Mammary epithelial cell (primary cell): ENCODE measurements at regions of chr1 and their contacts with region 1.

Region 1: DNA sequence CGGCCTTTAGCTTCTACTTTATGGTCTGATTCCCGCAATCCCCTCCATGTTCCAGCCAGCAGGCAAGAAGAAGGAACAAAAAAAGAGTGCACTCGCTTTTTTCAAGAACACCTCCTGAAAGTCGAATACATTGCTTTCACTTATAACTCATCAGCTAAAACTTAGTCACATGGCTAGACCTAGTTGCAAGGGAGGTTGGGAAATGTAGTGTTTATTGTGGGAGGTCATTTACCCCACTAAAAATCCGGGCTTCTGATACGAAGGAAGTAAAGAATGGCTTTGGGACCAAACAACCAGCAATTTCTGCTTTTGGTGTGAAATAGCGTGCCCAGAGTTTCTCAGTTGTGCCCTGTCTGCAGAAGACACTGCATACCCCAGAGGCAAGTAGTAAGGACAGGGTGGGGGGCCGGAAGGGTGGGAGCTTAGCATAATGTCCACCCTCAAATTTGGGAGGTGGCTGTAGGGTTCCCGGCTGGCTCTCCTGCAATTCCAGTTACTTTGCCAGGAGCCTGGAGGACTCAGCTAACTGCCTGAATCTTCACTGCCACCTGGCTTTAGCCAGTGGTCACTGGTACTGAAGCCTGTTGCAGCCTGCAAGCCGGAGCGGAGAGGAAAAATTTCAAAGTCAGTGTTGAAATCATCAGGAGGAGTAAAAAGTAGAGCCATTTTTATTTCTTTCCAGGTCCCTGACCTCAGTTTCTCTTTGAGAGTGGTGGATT is 57.7 kb upstream of the F3 start:
- DNase-seq: peak; percentile 57
- H3K4me3 ChIP-seq: no peak overlapping the region
- H3K27ac ChIP-seq: no peak overlapping the region
- H3K4me1 ChIP-seq: peaks cover 30% of the 10 kb centered on the region
- H3K27me3 ChIP-seq: no peaks in the 10 kb centered on the region
- CTCF ChIP-seq: peak; percentile 62 to 85

Region 2: GRCh38 chr1:94481473-94481933 is 117.8 kb before region 1 on chr1:
- CTCF ChIA-PET with region 1: interaction called, 14 read pairs
- dilution Hi-C with region 1: no loop called
- in situ Hi-C with region 1: no loop called
- intact Hi-C with region 1: loop called (anchors 1 kb)
- DNase-seq: peak; percentile 82
- H3K4me3 ChIP-seq: no peak overlapping the region
- H3K27ac ChIP-seq: no peak overlapping the region
- H3K4me1 ChIP-seq: no peaks in the 10 kb centered on the region
- H3K27me3 ChIP-seq: no peaks in the 10 kb centered on the region
- CTCF ChIP-seq: peak; percentile 83 to 90

Region 3: GRCh38 chr1:94527447-94528031 is 71.7 kb before region 1 on chr1:
- CTCF ChIA-PET with region 1: interaction called, 4 read pairs
- dilution Hi-C with region 1: no loop called
- in situ Hi-C with region 1: no loop called
- intact Hi-C with region 1: loop called (anchors 1 kb)
- DNase-seq: peak; percentile 89
- H3K4me3 ChIP-seq: no peak overlapping the region
- H3K27ac ChIP-seq: peak overlapping the region; percentile 8
- H3K4me1 ChIP-seq: no peaks in the 10 kb centered on the region
- H3K27me3 ChIP-seq: no peaks in the 10 kb centered on the region
- CTCF ChIP-seq: peak; percentile 8 to 21

Region 4: DNA sequence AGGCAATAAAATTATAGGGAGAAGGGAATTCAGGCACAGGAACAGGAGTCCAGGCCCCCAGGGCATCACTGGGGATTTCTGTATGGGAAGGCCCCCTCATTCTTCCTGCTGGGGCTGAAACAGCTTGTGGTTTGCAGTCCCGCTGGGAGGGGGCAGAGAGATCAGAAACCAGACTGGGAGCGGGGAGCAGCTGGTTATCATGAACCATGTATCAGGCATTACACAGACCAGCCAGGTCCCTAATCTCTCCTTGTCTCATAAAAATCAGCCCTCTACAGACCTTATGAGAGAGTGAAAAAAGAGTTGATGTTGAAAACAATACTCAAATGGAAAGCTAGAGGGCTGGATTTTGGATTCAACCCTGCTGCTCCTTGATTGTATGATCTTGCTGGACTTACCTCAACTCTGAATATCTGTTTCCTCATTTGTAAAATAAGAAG is 35.7 kb after region 1 on chr1:
- CTCF ChIA-PET with region 1: no interaction called
- dilution Hi-C with region 1: no loop called
- in situ Hi-C with region 1: no loop called
- intact Hi-C with region 1: no loop called
- DNase-seq: no peak
- H3K4me3 ChIP-seq: no peak overlapping the region
- H3K27ac ChIP-seq: no peak overlapping the region
- H3K4me1 ChIP-seq: peaks cover 14% of the 10 kb centered on the region
- H3K27me3 ChIP-seq: no peaks in the 10 kb centered on the region
- CTCF ChIP-seq: peak in 1 of 2 donors; percentile 13

Region 5: GRCh38 chr1:94679336-94680038 is 80.2 kb after region 1 on chr1:
- CTCF ChIA-PET with region 1: no interaction called
- dilution Hi-C with region 1: loop called (anchors 5 kb)
- in situ Hi-C with region 1: no loop called
- intact Hi-C with region 1: no loop called
- DNase-seq: no peak
- H3K4me3 ChIP-seq: no peak overlapping the region
- H3K27ac ChIP-seq: no peak overlapping the region
- H3K4me1 ChIP-seq: no peaks in the 10 kb centered on the region
- H3K27me3 ChIP-seq: no peaks in the 10 kb centered on the region
- CTCF ChIP-seq: no peak

Region 6: GRCh38 chr1:94727846-94728715 is 128.8 kb after region 1 on chr1:
- CTCF ChIA-PET with region 1: no interaction called
- dilution Hi-C with region 1: no loop called
- in situ Hi-C with region 1: no loop called
- intact Hi-C with region 1: loop called (anchors 5 kb)
- DNase-seq: peak; percentile 98
- H3K4me3 ChIP-seq: no peak overlapping the region
- H3K27ac ChIP-seq: peak overlapping the region; percentile 71
- H3K4me1 ChIP-seq: peaks cover 67% of the 10 kb centered on the region
- H3K27me3 ChIP-seq: no peaks in the 10 kb centered on the region
- CTCF ChIP-seq: no peak

Region 7: DNA sequence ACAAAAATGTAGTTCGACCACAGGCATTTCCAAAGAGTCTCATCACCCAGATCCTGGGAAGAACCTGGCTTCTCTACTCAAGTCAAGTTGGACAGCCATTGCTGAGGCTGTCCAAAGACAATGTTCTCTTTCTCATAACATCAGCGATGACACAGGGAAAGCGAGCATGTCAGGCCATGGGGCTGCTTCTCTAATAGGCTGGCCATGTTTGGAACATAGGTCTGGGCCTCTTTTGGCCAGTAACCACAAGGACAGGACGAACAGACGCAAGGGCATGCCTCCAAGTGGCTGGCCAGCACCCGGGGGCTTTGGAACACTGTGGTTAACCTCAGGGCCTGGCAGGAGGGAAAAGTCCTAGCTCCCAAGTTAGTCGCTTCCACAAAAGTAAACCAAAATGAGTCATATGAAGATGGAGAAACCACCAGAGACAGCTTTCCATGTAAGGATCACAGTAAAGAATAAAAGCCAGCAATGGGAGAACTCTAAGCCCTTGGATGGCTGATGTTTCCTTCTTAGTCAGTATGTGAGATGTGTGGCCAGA is 140.3 kb after region 1 on chr1:
- CTCF ChIA-PET with region 1: no interaction called
- dilution Hi-C with region 1: no loop called
- in situ Hi-C with region 1: no loop called
- intact Hi-C with region 1: loop called (anchors 1 kb)
- DNase-seq: peak; percentile 95
- H3K4me3 ChIP-seq: no peak overlapping the region
- H3K27ac ChIP-seq: peak overlapping the region; percentile 65
- H3K4me1 ChIP-seq: peaks cover 67% of the 10 kb centered on the region
- H3K27me3 ChIP-seq: no peaks in the 10 kb centered on the region
- CTCF ChIP-seq: no peak